ENCODE measurements at regions of chr15 and their contacts with region 1.

Region 1: GRCh38 chr15:92224843-92225242 is 168.8 kb upstream of the ST8SIA2 start:
- DNase-seq: no peak
- ATAC-seq: no peak

Region 2: DNA sequence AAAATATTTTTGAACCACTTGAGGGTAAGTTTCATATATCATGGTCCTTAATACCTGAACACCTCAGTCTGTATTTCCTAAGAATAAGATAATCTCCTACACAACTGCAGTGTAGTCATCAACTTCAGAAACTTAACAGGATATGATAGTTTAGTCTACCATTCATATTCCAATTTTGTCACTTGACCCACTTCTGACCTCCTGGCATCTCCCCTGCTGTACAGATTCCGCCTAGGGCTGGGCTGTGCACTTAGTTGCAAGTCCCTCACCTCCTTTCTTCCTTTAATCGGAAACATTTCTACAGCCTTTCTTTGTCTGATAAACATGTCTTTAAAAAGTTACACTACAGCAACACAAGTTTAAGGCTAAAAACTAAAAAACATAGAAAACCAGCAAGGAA is 589.8 kb before region 1 on chr15:
- intact Hi-C with region 1: loop called (anchors 5 kb)
- DNase-seq: no peak
- ATAC-seq: no peak

Measured in sciatic nerve (tissue), 2 donors.